ENCODE measurements at regions of chr13 and their contacts with region 1.

Region 1: DNA sequence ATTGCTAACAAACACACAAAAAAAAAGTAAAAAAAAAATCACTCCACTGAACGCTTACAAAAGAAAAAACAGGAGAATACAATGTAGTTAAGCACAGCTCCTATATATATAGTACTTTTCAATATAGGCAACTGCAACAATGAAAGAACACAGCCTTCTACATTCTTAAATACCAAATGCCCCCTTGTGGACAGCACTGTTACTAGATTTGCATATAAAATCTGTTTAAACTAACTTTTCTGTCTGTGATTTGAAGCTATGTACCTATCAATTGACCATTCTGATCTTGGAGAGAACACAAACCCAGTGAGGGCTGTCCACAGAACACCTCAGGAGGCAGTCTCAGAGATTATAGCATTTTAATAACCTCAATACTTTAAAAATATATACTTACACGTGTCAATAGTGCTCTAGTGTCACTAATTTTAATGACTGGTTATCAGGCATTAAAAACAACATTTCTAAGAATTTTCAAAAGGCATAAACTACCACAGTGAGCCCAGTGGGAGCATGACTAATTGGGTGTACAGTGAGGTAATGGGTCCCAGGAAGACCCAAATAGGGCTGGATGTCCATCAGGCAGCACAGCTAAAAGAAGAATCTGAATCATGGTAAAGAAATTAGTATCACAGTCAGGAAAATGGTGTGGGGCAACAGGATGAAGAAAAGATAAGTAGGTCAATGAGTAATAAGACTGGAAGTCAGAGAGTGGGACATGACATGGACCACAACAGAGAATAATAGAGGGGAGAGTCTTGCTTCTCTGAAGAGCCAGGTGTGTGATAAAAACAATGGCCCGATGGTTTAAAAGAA is 22.2 kb downstream of the CCDC169 start:
- DNase-seq: no peak
- H3K4me3 ChIP-seq: no peak overlapping the region
- H3K27me3 ChIP-seq: no peaks in the 10 kb centered on the region
- CTCF ChIP-seq: peak; percentile 63

Region 2: GRCh38 chr13:35966024-35966423 is 309.4 kb before region 1 on chr13:
- CTCF ChIA-PET with region 1: interaction called, 13 read pairs
- POLR2A ChIA-PET with region 1: no interaction called
- DNase-seq: no peak
- H3K4me3 ChIP-seq: no peak overlapping the region
- H3K27me3 ChIP-seq: no peaks in the 10 kb centered on the region
- CTCF ChIP-seq: no peak

Region 3: GRCh38 chr13:36724141-36724540 is 448.7 kb after region 1 on chr13:
- CTCF ChIA-PET with region 1: no interaction called
- POLR2A ChIA-PET with region 1: no interaction called
- DNase-seq: no peak
- H3K4me3 ChIP-seq: no peak overlapping the region
- H3K27me3 ChIP-seq: no peaks in the 10 kb centered on the region; the same call in 1 of the 2 replicates
- CTCF ChIP-seq: no peak